Esophagus muscularis mucosa (tissue), 4 donors: ENCODE measurements at regions of chr18 and their contacts with region 1.

Region 1: DNA sequence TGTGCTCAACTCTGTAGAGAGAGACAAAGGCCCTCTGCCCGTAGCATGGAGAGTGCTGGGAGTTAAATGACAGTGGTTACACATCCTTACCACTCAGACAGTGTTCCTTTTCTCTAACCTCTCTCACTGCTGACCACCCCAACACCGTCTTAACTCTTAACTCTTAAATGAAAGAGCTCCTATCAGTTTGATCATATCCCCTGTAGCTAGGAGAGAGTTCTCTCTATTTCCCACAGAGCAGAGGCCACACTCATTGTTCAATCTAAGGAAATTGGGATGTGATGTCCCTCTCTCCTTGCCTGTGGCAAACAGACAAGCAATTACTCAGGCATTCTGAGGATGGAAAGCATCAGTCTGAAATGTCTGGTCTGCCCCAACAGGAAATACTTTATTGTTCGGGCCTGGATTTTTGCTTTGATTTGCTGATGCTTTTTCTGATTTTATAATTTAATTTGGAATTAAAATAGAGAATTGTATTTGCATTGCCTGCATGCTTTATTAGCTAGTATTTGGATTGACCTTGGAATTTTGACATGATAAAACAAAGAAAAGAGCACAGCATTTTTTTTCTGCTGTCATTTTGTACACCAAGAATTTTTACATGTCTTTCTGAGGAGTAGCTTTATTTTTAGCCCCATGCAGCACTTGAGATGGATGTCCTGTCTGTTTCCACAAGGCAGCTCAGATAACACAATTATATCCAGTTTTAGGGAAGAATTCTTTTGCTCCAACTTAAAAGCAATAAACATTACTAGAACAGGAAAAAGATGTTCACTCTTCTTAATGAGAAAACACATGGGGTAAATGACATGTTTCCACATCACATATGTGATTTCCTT is 27.7 kb upstream of the IER3IP1 start:
- DNase-seq: no peak
- H3K4me3 ChIP-seq: no peak overlapping the region
- H3K27ac ChIP-seq: no peak overlapping the region
- H3K4me1 ChIP-seq: no peaks in the 10 kb centered on the region
- H3K27me3 ChIP-seq: peaks cover 0 to 17% (median 0%) of the 10 kb centered on the region in 4 donors
- CTCF ChIP-seq: no peak
- EP300 ChIP-seq: no peak
- POLR2A ChIP-seq: no peak

Region 2: GRCh38 chr18:47100214-47100831 is 103.5 kb before region 1 on chr18:
- intact Hi-C with region 1: loop called (anchors 2 kb)
- DNase-seq: no peak
- H3K4me3 ChIP-seq: no peak overlapping the region
- H3K27ac ChIP-seq: no peak overlapping the region
- H3K4me1 ChIP-seq: peaks cover 0 to 8% (median 1%) of the 10 kb centered on the region in 4 donors
- H3K27me3 ChIP-seq: no peaks in the 10 kb centered on the region
- CTCF ChIP-seq: peak; percentile 70 to 76 (median 71)
- EP300 ChIP-seq: no peak
- POLR2A ChIP-seq: no peak